ENCODE measurements at regions of chr6 and their contacts with region 1.

Region 1: GRCh38 chr6:1604158-1605030 is 5.3 kb upstream of the FOXC1 start:
- DNase-seq: peak in 2 of 3 donors; percentile 55 to 64
- H3K4me3 ChIP-seq: peak overlapping the region in 2 of 3 experiments; percentile 13 to 66
- H3K4me3 Mint-ChIP-seq: peak overlapping the region in 1 of 2 donors; percentile 79
- H3K27ac ChIP-seq: no peak overlapping the region
- H3K27ac Mint-ChIP-seq: no peak overlapping the region
- H3K4me1 ChIP-seq: peaks cover 38 to 44% of the 10 kb centered on the region in 2 donors
- H3K4me1 Mint-ChIP-seq: peaks cover 38% of the 10 kb centered on the region
- H3K27me3 ChIP-seq: peaks cover 85 to 98% of the 10 kb centered on the region in 2 donors
- H3K27me3 Mint-ChIP-seq: peaks cover 84 to 99% (median 84%) of the 10 kb centered on the region in 3 donors
- CTCF ChIP-seq: peak; percentile 99

Region 2: DNA sequence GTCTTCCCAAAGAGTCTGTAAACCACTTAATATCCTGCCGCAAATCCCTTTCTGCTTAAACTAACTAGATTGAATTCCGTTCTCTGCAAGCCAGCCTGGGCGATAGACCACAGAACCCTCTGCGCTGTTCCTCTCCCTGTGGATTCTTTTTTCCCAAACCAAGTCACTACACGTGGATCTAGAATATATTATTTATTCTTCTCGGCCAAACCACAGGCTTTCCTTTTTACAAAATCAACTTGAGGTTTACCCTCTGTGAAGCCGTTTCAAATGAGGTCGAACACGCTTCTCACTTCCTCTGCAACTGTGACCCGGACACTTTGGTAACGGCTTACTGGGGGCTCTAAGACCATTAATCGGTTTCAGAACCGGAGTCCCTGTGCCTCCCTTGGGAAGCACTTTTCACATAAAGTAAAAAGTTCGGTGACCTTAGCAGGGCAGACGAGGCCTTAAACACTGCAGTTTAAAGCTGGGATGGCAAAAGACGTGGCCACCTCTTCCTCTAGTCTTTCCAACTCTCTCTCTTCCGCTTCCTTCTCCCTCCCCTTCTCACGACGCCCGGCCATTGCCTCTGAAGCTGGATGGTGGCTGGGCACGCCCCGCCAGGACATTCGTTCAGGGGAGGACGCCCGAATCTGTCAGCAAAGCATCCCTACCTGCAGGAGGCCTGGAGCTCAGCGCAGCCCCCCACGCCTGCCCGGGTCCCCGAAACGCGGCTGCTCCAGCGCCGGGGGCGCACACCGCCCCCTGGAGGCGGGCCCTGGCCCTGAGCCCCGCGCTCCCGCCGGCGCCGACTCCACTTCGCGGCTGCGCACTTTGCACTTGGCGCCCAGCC is 49.7 kb before region 1 on chr6:
- intact Hi-C with region 1: no loop called
- DNase-seq: peak; percentile 33 to 53 (median 48)
- H3K4me3 ChIP-seq: peak overlapping the region; percentile 60 to 88 (median 85)
- H3K4me3 Mint-ChIP-seq: peak overlapping the region; percentile 88 to 90
- H3K27ac ChIP-seq: peak overlapping the region; percentile 36 to 78
- H3K27ac Mint-ChIP-seq: peak overlapping the region; percentile 67 to 88 (median 77)
- H3K4me1 ChIP-seq: peaks cover 15 to 23% of the 10 kb centered on the region in 2 donors
- H3K4me1 Mint-ChIP-seq: peaks cover 20% of the 10 kb centered on the region
- H3K27me3 ChIP-seq: no peaks in the 10 kb centered on the region
- H3K27me3 Mint-ChIP-seq: peaks cover 3 to 13% (median 9%) of the 10 kb centered on the region in 3 donors
- CTCF ChIP-seq: peak; percentile 98

Region 3: GRCh38 chr6:1641323-1641885 is 37.0 kb after region 1 on chr6:
- intact Hi-C with region 1: no loop called
- DNase-seq: no peak
- H3K4me3 ChIP-seq: no peak overlapping the region
- H3K4me3 Mint-ChIP-seq: no peak overlapping the region
- H3K27ac ChIP-seq: no peak overlapping the region
- H3K27ac Mint-ChIP-seq: no peak overlapping the region
- H3K4me1 ChIP-seq: peaks cover 5 to 7% of the 10 kb centered on the region in 2 donors
- H3K4me1 Mint-ChIP-seq: peaks cover 12% of the 10 kb centered on the region
- H3K27me3 ChIP-seq: no peaks in the 10 kb centered on the region
- H3K27me3 Mint-ChIP-seq: peaks cover 1 to 5% (median 4%) of the 10 kb centered on the region in 3 donors
- CTCF ChIP-seq: no peak

Region 4: GRCh38 chr6:2103644-2104523 is 499.5 kb after region 1 on chr6:
- intact Hi-C with region 1: loop called (anchors 2 to 5 kb)
- DNase-seq: peak in 2 of 3 donors; percentile 27 to 37
- H3K4me3 ChIP-seq: peak overlapping the region in 1 of 3 experiments; percentile 13
- H3K4me3 Mint-ChIP-seq: peak overlapping the region in 1 of 2 donors; percentile 57
- H3K27ac ChIP-seq: no peak overlapping the region
- H3K27ac Mint-ChIP-seq: no peak overlapping the region
- H3K4me1 ChIP-seq: peaks cover 9 to 17% of the 10 kb centered on the region in 2 donors
- H3K4me1 Mint-ChIP-seq: peaks cover 7% of the 10 kb centered on the region
- H3K27me3 ChIP-seq: no peaks in the 10 kb centered on the region
- H3K27me3 Mint-ChIP-seq: no peaks in the 10 kb centered on the region
- CTCF ChIP-seq: peak; percentile 72

Region 5: GRCh38 chr6:2190661-2191389 is 586.4 kb after region 1 on chr6:
- intact Hi-C with region 1: loop called (anchors 5 kb)
- DNase-seq: no peak
- H3K4me3 ChIP-seq: no peak overlapping the region
- H3K4me3 Mint-ChIP-seq: no peak overlapping the region
- H3K27ac ChIP-seq: no peak overlapping the region
- H3K27ac Mint-ChIP-seq: no peak overlapping the region
- H3K4me1 ChIP-seq: no peaks in the 10 kb centered on the region
- H3K4me1 Mint-ChIP-seq: peaks cover 5% of the 10 kb centered on the region
- H3K27me3 ChIP-seq: no peaks in the 10 kb centered on the region
- H3K27me3 Mint-ChIP-seq: no peaks in the 10 kb centered on the region
- CTCF ChIP-seq: no peak

Region 6: DNA sequence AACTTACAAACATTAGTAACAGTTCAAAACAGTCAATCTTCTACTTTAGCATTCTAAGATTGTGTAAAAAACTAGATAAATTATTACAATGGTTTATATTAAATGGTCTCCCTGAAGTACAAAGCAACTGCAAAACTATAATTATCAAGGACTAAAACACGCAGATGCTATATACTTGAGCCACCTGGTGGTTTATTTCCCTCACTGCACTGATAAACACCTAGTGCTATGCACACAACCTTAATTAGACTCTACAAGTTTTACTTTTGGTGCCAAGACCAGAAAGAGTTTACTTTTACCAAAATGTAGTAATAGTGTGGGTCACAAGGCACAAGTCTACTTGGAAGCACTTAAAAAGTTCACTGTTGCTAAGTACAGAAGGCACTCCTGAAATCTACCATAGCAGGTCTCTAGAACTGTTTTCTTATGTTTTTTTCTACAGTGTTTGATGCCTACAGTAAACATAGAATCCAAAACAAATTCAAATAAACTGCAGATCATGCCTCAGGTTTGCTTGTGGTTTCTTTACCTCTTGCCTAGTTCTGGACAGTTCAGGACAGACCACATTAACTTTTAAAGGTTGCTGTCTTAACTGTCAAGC is 591.8 kb after region 1 on chr6:
- intact Hi-C with region 1: loop called (anchors 5 kb)
- DNase-seq: peak; percentile 22 to 44 (median 30)
- H3K4me3 ChIP-seq: no peak overlapping the region
- H3K4me3 Mint-ChIP-seq: no peak overlapping the region
- H3K27ac ChIP-seq: no peak overlapping the region
- H3K27ac Mint-ChIP-seq: no peak overlapping the region
- H3K4me1 ChIP-seq: peaks cover 11 to 12% of the 10 kb centered on the region in 2 donors
- H3K4me1 Mint-ChIP-seq: peaks cover 19% of the 10 kb centered on the region
- H3K27me3 ChIP-seq: no peaks in the 10 kb centered on the region
- H3K27me3 Mint-ChIP-seq: no peaks in the 10 kb centered on the region
- CTCF ChIP-seq: peak; percentile 83

Region 7: GRCh38 chr6:2448820-2449571 is 844.6 kb after region 1 on chr6:
- intact Hi-C with region 1: loop called in 1 of 2 experiments (anchors 5 kb)
- DNase-seq: peak; percentile 43 to 68 (median 52)
- H3K4me3 ChIP-seq: peak overlapping the region in 1 of 3 experiments; percentile 46
- H3K4me3 Mint-ChIP-seq: peak overlapping the region; percentile 9 to 78
- H3K27ac ChIP-seq: no peak overlapping the region
- H3K27ac Mint-ChIP-seq: no peak overlapping the region
- H3K4me1 ChIP-seq: peaks cover 4 to 5% of the 10 kb centered on the region in 2 donors
- H3K4me1 Mint-ChIP-seq: peaks cover 5% of the 10 kb centered on the region
- H3K27me3 ChIP-seq: peaks cover 0 to 3% of the 10 kb centered on the region in 2 donors
- H3K27me3 Mint-ChIP-seq: peaks cover under 1 to 4% (median 3%) of the 10 kb centered on the region in 3 donors
- CTCF ChIP-seq: peak; percentile 83

Region 8: DNA sequence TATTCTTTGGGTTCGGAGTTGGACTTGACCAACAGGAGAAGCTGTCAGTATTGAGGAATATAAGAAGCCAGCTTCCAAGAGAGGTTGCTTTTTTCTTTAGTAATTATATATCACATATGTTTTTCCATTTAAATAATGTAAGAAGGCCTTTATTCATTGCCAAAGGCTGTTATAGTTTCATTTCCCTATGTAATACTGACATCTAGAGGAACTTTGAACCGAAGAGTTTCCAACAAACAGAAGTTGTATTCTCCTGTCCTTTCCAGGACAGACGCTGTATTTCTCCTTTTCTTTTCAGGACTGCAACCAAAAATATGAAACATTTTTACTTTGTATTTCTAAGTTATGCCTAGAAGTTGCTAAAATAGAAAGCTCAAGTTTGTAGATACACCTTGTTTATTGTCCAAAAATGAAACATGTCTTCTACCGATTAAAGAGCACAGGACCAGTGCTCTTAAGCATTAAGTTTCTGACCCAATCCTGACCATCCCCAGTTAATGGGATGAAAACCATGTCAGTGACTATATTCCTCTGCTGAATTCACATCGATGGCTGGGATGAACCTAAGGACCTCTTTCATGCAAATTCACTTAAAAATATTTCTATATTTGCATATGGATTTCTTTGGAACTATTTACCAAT is 1091.2 kb after region 1 on chr6:
- intact Hi-C with region 1: loop called (anchors 5 kb)
- DNase-seq: peak in 2 of 3 donors; percentile 45 to 59
- H3K4me3 ChIP-seq: no peak overlapping the region
- H3K4me3 Mint-ChIP-seq: no peak overlapping the region
- H3K27ac ChIP-seq: no peak overlapping the region
- H3K27ac Mint-ChIP-seq: no peak overlapping the region
- H3K4me1 ChIP-seq: no peaks in the 10 kb centered on the region
- H3K4me1 Mint-ChIP-seq: peaks cover 2% of the 10 kb centered on the region
- H3K27me3 ChIP-seq: no peaks in the 10 kb centered on the region
- H3K27me3 Mint-ChIP-seq: peaks cover 0 to 5% (median 0%) of the 10 kb centered on the region in 3 donors
- CTCF ChIP-seq: peak; percentile 58